PC-9 (cell line): ENCODE measurements at regions of chr5 and their contacts with region 1.

Region 1: GRCh38 chr5:177049285-177049684 is 26.8 kb downstream of the ZNF346 start:
- DNase-seq: no peak
- H3K4me3 ChIP-seq: no peak overlapping the region
- H3K27ac ChIP-seq: no peak overlapping the region
- H3K4me1 ChIP-seq: no peaks in the 10 kb centered on the region
- H3K27me3 ChIP-seq: no peaks in the 10 kb centered on the region
- CTCF ChIP-seq: no peak

Region 2: GRCh38 chr5:176965633-176966032 is 83.7 kb before region 1 on chr5:
- CTCF ChIA-PET with region 1: no interaction called
- POLR2A ChIA-PET with region 1: interaction called, 20 read pairs
- intact Hi-C with region 1: no loop called
- DNase-seq: no peak
- H3K4me3 ChIP-seq: no peak overlapping the region
- H3K27ac ChIP-seq: no peak overlapping the region
- H3K4me1 ChIP-seq: no peaks in the 10 kb centered on the region
- H3K27me3 ChIP-seq: no peaks in the 10 kb centered on the region
- CTCF ChIP-seq: no peak

Region 3: GRCh38 chr5:177077335-177077734 is 28.1 kb after region 1 on chr5:
- CTCF ChIA-PET with region 1: no interaction called
- POLR2A ChIA-PET with region 1: no interaction called
- intact Hi-C with region 1: no loop called
- DNase-seq: no peak
- H3K4me3 ChIP-seq: no peak overlapping the region
- H3K27ac ChIP-seq: no peak overlapping the region
- H3K4me1 ChIP-seq: no peaks in the 10 kb centered on the region
- H3K27me3 ChIP-seq: no peaks in the 10 kb centered on the region
- CTCF ChIP-seq: no peak

Region 4: GRCh38 chr5:177209610-177210009 is 160.3 kb after region 1 on chr5:
- CTCF ChIA-PET with region 1: no interaction called
- POLR2A ChIA-PET with region 1: interaction called, 12 read pairs
- intact Hi-C with region 1: no loop called
- DNase-seq: no peak
- H3K4me3 ChIP-seq: no peak overlapping the region
- H3K27ac ChIP-seq: no peak overlapping the region
- H3K4me1 ChIP-seq: no peaks in the 10 kb centered on the region
- H3K27me3 ChIP-seq: no peaks in the 10 kb centered on the region
- CTCF ChIP-seq: no peak

Region 5: DNA sequence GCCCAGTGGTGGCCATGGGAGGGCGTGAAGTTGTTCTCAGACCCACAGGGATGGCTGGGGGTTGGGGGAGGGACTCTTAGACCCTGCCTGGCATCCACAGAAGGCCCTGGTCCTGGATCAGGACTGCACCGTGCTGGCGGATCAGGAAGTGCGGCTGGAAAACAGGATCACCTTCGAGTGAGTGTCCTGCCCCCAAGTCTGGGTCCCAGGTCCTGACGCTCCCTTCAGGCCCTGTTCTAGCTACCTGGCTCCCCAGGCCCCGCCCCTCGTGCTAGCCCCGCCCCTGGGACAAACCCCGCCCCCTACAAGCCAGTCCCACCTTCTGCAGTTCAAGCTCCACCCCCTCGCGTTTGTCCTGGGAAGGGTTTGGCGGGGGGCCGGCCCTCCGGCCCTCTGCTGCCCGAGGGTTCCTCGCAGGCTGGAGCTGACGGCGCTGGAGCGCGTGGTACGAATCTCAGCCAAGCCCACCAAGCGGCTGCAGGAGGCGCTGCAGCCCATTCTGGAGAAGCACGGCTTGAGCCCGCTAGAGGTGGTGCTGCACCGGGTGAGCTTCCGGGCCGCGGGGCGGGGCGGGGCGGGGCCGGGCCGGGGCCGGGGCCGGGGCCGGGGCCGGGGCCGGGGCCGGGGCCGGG is 321.3 kb after region 1 on chr5:
- CTCF ChIA-PET with region 1: no interaction called
- POLR2A ChIA-PET with region 1: no interaction called
- intact Hi-C with region 1: no loop called
- DNase-seq: peak; percentile 86 to 95
- H3K4me3 ChIP-seq: peak overlapping the region; percentile 54; the same call in 1 of the 2 replicates
- H3K27ac ChIP-seq: no peak overlapping the region
- H3K4me1 ChIP-seq: peaks cover 11% of the 10 kb centered on the region
- H3K27me3 ChIP-seq: no peaks in the 10 kb centered on the region
- CTCF ChIP-seq: peak; percentile 66